ENCODE measurements at regions of chr6 and their contacts with region 1.

Region 1: GRCh38 chr6:134182528-134182927 is 130.1 kb upstream of the SLC2A12 start:
- DNase-seq: no peak
- H3K4me3 ChIP-seq: no peak overlapping the region
- H3K27ac ChIP-seq: no peak overlapping the region
- H3K4me1 ChIP-seq: peaks cover 0 to 6% of the 10 kb centered on the region in 2 donors
- H3K27me3 ChIP-seq: no peaks in the 10 kb centered on the region
- CTCF ChIP-seq: no peak
- POLR2A ChIP-seq: no peak

Region 2: GRCh38 chr6:134235937-134236751 is 53.6 kb after region 1 on chr6:
- intact Hi-C with region 1: loop called in 1 of 2 experiments (anchors 10 kb)
- DNase-seq: no peak
- H3K4me3 ChIP-seq: no peak overlapping the region
- H3K27ac ChIP-seq: peak overlapping the region in 2 of 5 donors; percentile 15 to 60
- H3K4me1 ChIP-seq: no peaks in the 10 kb centered on the region
- H3K27me3 ChIP-seq: no peaks in the 10 kb centered on the region
- CTCF ChIP-seq: no peak
- POLR2A ChIP-seq: no peak

Region 3: GRCh38 chr6:134295953-134296553 is 113.5 kb after region 1 on chr6:
- intact Hi-C with region 1: loop called (anchors 10 kb)
- DNase-seq: peak; percentile 79 to 94 (median 87)
- H3K4me3 ChIP-seq: no peak overlapping the region
- H3K27ac ChIP-seq: peak overlapping the region; percentile 72 to 95 (median 89)
- H3K4me1 ChIP-seq: peaks cover 40 to 45% of the 10 kb centered on the region in 2 donors
- H3K27me3 ChIP-seq: no peaks in the 10 kb centered on the region
- CTCF ChIP-seq: no peak
- POLR2A ChIP-seq: peak in 1 of 2 donors; percentile 64